B cell (primary cell): ENCODE measurements at regions of chr5 and their contacts with region 1.

Region 1: DNA sequence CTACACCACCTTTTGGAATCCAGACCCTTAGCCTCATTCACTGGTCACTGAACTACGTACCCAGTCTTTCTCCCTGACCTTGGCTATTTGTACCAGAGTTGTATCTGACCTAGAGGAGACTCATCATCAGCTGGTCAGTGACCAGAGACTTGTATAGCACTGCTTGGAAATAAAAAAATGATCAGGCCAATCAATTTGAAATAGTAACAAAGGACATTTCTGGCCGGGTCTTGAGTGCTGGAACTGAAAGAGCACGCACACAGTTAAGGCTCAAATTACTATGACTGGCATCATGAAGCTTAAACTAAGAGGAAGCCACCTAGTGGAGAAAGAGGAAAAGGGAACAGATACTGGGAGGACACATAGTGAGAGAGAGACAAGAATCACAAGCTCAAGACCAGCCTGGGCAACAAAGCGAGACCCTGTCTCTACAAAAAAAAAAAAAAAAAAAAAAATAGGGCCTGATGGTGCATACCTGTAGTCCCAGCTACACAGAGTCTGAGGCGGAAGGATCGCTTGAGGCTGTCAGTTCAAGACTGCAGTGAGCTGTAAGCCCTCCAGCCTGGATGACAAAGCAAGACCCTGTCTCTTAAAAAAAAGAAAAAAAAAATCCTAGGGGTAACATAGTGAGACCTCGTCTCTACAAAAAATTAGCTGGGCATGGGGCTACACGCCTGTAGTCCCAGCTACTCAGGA is 12.8 kb upstream of the SRP19 start:
- DNase-seq: peak; percentile 77
- ATAC-seq: peak; percentile 100
- H3K4me3 ChIP-seq: no peak overlapping the region
- H3K4me3 Mint-ChIP-seq: peak overlapping the region; percentile 0
- H3K27ac ChIP-seq: no peak overlapping the region
- H3K27ac Mint-ChIP-seq: peak overlapping the region; percentile 39
- H3K4me1 ChIP-seq: peaks cover 0 to 9% of the 10 kb centered on the region in 2 donors
- H3K4me1 Mint-ChIP-seq: peaks cover 5% of the 10 kb centered on the region
- H3K27me3 ChIP-seq: no peaks in the 10 kb centered on the region
- H3K27me3 Mint-ChIP-seq: peaks cover 6% of the 10 kb centered on the region
- CTCF ChIP-seq: peak; percentile 83

Region 2: GRCh38 chr5:112795944-112796678 is 52.2 kb before region 1 on chr5:
- CTCF ChIA-PET with region 1: interaction called, 4 read pairs
- POLR2A ChIA-PET with region 1: no interaction called
- intact Hi-C with region 1: loop called (anchors 10 kb)
- DNase-seq: peak; percentile 41
- ATAC-seq: peak; percentile 88
- H3K4me3 ChIP-seq: peak overlapping the region in 1 of 5 experiments; percentile 29
- H3K4me3 Mint-ChIP-seq: peak overlapping the region; percentile 68
- H3K27ac ChIP-seq: peak overlapping the region; percentile 69 to 74
- H3K27ac Mint-ChIP-seq: peak overlapping the region; percentile 72
- H3K4me1 ChIP-seq: peaks cover 22 to 23% of the 10 kb centered on the region in 2 donors
- H3K4me1 Mint-ChIP-seq: peaks cover 39% of the 10 kb centered on the region
- H3K27me3 ChIP-seq: no peaks in the 10 kb centered on the region
- H3K27me3 Mint-ChIP-seq: no peaks in the 10 kb centered on the region
- CTCF ChIP-seq: no peak

Region 3: DNA sequence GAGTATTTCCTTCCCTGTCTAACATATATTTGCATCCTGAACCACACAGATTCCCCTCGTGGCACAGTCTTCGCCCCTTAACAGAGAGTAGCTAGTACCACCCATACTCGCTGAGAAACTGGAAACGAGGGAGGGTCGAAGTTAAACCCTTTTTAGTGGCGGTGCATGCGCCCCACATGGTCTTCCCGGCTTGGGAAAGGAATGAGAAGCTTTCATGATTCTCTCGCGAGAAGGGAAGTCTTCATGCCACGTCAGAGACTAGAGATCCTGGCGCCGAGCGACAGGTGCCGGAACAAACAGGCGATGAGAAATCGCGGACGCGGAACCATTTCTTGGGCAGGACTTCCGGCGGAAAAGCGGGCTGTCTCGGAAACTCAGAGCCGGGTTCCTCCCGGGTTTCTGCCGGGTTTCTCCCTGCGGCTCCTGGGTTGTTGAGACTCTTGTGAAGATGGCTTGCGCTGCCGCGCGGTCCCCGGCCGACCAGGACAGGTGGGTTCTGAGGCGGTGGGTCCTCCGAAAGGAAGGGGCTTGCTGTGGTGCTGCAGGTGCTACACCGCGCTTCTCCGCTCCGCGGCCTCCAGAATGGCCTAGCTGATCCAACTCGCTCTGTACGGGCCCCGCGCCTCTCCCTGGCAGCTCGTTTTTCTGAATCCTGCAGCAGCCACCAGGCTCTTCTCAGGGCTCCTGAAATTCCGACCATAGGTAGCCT is 12.8 kb after region 1 on chr5 and contains the start of gene SRP19:
- CTCF ChIA-PET with region 1: interaction called, 18 read pairs
- POLR2A ChIA-PET with region 1: no interaction called
- intact Hi-C with region 1: no loop called
- DNase-seq: peak; percentile 94
- ATAC-seq: peak; percentile 94
- H3K4me3 ChIP-seq: peak within 1 kb of the TSS; percentile 77 to 99 (median 95)
- H3K4me3 Mint-ChIP-seq: peak within 1 kb of the TSS; percentile 98
- H3K27ac ChIP-seq: peak within 1 kb of the TSS; percentile 83 to 92
- H3K27ac Mint-ChIP-seq: peak within 1 kb of the TSS; percentile 93
- H3K4me1 ChIP-seq: peaks cover 17 to 19% of the 10 kb centered on the region in 2 donors
- H3K4me1 Mint-ChIP-seq: peaks cover 30% of the 10 kb centered on the region
- H3K27me3 ChIP-seq: peaks cover 0 to 2% (median under 1%) of the 10 kb centered on the region in 4 experiments
- H3K27me3 Mint-ChIP-seq: peaks cover 17% of the 10 kb centered on the region
- CTCF ChIP-seq: no peak
- total RNA-seq, gene SRP19: 33.8 and 41.5 TPM in 2 replicates

Region 4: GRCh38 chr5:112958093-112959088 is 110.1 kb after region 1 on chr5:
- CTCF ChIA-PET with region 1: no interaction called
- POLR2A ChIA-PET with region 1: no interaction called
- intact Hi-C with region 1: loop called (anchors 5 kb)
- DNase-seq: no peak
- ATAC-seq: no peak
- H3K4me3 ChIP-seq: no peak overlapping the region
- H3K4me3 Mint-ChIP-seq: no peak overlapping the region
- H3K27ac ChIP-seq: no peak overlapping the region
- H3K27ac Mint-ChIP-seq: no peak overlapping the region
- H3K4me1 ChIP-seq: no peaks in the 10 kb centered on the region
- H3K4me1 Mint-ChIP-seq: peaks cover 13% of the 10 kb centered on the region
- H3K27me3 ChIP-seq: no peaks in the 10 kb centered on the region
- H3K27me3 Mint-ChIP-seq: no peaks in the 10 kb centered on the region
- CTCF ChIP-seq: no peak